ENCODE measurements at regions of chr7 and their contacts with region 1.

Region 1: DNA sequence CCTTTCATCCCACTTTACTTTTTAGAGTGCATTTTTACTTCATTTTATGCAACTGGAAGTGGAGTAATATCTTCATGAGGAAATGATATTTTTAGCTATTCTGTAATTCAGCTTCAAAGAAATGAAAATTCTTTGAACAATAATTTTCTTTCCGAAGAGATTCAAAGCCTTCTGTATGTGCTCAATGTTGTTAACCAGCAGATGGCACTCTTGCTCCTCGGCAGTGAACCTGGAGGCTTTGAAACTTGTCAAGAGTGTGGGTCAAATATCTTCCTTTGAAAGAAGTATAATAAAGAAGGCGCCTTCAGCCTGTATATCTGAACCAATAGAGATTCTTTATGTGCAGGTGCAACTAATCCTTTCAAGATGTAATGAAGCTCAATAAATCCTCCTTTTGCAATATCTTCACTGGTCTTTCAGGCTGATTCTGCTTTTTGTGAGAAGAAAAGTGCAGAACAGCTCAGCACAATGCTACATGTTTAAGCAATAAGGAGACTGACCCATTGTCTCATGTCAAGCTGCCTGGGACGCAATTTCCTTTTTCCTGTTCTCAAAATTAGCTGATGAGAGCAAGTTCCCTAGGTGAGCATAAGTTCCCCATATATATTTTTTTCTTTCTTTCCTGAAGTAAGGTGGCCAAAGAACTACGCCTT is 258.4 kb downstream of the SEMA3A start:
- DNase-seq: peak in 8 of 9 experiments; percentile 10 to 62 (median 46)
- ATAC-seq: peak; percentile 61
- H3K4me3 ChIP-seq: no peak overlapping the region
- H3K4me3 Mint-ChIP-seq: no peak overlapping the region
- H3K27ac ChIP-seq: no peak overlapping the region
- H3K27ac Mint-ChIP-seq: no peak overlapping the region
- H3K4me1 ChIP-seq: no peaks in the 10 kb centered on the region
- H3K4me1 Mint-ChIP-seq: no peaks in the 10 kb centered on the region
- H3K27me3 ChIP-seq: no peaks in the 10 kb centered on the region
- H3K27me3 Mint-ChIP-seq: no peaks in the 10 kb centered on the region
- CTCF ChIP-seq: peak; percentile 71

Region 2: GRCh38 chr7:83947260-83947659 is 11.1 kb after region 1 on chr7:
- CTCF ChIA-PET with region 1: interaction called, 17 read pairs
- POLR2A ChIA-PET with region 1: interaction called, 3 read pairs
- intact Hi-C with region 1: no loop called
- DNase-seq: peak in 1 of 9 experiments; percentile 8
- ATAC-seq: no peak
- H3K4me3 ChIP-seq: no peak overlapping the region
- H3K4me3 Mint-ChIP-seq: no peak overlapping the region
- H3K27ac ChIP-seq: no peak overlapping the region
- H3K27ac Mint-ChIP-seq: no peak overlapping the region
- H3K4me1 ChIP-seq: no peaks in the 10 kb centered on the region
- H3K4me1 Mint-ChIP-seq: no peaks in the 10 kb centered on the region
- H3K27me3 ChIP-seq: no peaks in the 10 kb centered on the region
- H3K27me3 Mint-ChIP-seq: no peaks in the 10 kb centered on the region
- CTCF ChIP-seq: no peak

Region 3: GRCh38 chr7:83976295-83976694 is 40.1 kb after region 1 on chr7:
- CTCF ChIA-PET with region 1: interaction called, 4 read pairs
- POLR2A ChIA-PET with region 1: no interaction called
- intact Hi-C with region 1: loop called in 1 of 2 experiments (anchors 1 kb)
- DNase-seq: peak in 3 of 9 experiments; percentile 7 to 49 (median 32)
- ATAC-seq: peak; percentile 70
- H3K4me3 ChIP-seq: no peak overlapping the region
- H3K4me3 Mint-ChIP-seq: no peak overlapping the region
- H3K27ac ChIP-seq: no peak overlapping the region
- H3K27ac Mint-ChIP-seq: no peak overlapping the region
- H3K4me1 ChIP-seq: no peaks in the 10 kb centered on the region
- H3K4me1 Mint-ChIP-seq: no peaks in the 10 kb centered on the region
- H3K27me3 ChIP-seq: no peaks in the 10 kb centered on the region
- H3K27me3 Mint-ChIP-seq: no peaks in the 10 kb centered on the region
- CTCF ChIP-seq: peak; percentile 73

Region 4: DNA sequence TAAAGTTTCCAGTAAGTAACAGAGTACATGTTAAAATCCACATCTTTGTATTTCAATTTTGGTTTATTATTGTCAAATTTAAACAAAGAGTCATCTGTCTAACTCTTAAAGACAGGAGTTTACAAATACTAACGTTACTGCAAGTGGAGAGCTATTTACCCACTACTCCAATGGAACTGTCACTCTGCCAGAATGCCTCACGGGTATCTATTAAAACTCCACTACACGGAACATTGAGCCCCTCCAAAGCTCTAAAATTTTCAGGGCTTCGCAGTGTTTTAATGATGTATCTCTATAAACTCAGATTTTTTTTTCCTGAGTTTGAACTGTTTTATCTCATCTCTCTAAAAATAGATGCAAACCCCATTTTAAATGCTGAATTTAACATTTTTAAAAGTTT is 647.1 kb after region 1 on chr7:
- CTCF ChIA-PET with region 1: no interaction called
- POLR2A ChIA-PET with region 1: no interaction called
- intact Hi-C with region 1: no loop called
- DNase-seq: no peak
- ATAC-seq: no peak
- H3K4me3 ChIP-seq: no peak overlapping the region
- H3K4me3 Mint-ChIP-seq: no peak overlapping the region
- H3K27ac ChIP-seq: no peak overlapping the region
- H3K27ac Mint-ChIP-seq: no peak overlapping the region
- H3K4me1 ChIP-seq: no peaks in the 10 kb centered on the region
- H3K4me1 Mint-ChIP-seq: no peaks in the 10 kb centered on the region
- H3K27me3 ChIP-seq: no peaks in the 10 kb centered on the region
- H3K27me3 Mint-ChIP-seq: no peaks in the 10 kb centered on the region
- CTCF ChIP-seq: no peak

Region 5: DNA sequence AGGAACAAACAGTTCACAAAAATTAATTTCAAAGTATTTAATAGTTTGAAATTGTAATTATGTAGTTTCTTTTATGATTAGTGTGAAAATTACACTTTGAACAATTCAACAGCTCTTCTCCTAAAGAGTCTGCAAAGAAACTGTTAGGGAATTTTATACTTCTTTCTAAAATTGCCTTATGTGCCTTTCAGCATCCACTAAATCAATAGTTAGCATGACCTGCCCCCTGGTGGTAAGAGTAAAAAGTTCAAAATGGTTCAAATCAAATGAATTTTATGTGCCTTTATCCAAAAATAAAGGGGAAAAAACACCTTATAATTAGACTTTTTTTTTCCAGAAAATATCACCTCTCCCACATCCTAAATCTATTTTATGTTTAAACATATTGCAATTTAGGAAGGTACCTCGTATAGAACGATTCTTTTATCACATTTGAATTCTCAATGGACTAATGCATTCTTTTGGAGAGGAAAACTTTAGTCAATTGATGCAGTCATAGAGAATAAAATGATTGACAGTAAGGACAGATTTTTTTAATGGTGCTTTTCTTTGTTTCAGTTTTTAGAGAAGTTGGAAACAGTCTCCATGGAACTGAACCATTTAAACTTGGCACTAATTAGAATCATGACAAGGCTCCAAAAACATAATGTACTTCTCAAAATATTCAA is 1087.0 kb after region 1 on chr7:
- CTCF ChIA-PET with region 1: interaction called, 20 read pairs
- POLR2A ChIA-PET with region 1: no interaction called
- intact Hi-C with region 1: loop called (anchors 1 kb)
- DNase-seq: peak in 3 of 9 experiments; percentile 31 to 48 (median 32)
- ATAC-seq: no peak
- H3K4me3 ChIP-seq: no peak overlapping the region
- H3K4me3 Mint-ChIP-seq: no peak overlapping the region
- H3K27ac ChIP-seq: no peak overlapping the region
- H3K27ac Mint-ChIP-seq: no peak overlapping the region
- H3K4me1 ChIP-seq: no peaks in the 10 kb centered on the region
- H3K4me1 Mint-ChIP-seq: no peaks in the 10 kb centered on the region
- H3K27me3 ChIP-seq: no peaks in the 10 kb centered on the region
- H3K27me3 Mint-ChIP-seq: peaks cover 3% of the 10 kb centered on the region
- CTCF ChIP-seq: peak; percentile 69

Region 6: DNA sequence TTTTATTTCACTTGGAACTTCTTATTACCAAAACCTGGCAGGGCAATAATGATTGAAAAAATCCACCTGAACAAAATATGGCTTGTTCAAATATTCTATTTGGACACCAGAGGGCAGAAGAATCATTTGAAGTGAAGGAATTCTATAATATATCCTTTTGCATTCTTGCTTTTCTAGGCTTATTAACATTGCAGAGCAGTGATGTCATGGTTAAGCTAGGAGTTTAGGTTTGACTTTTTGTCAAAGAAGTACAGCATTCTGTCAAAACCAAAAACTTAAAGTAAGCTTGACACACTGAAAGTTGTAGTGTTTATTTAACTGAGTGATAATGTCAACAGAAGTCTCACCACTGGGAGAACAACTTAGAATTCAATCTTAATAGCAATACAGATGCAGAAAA is 1094.7 kb after region 1 on chr7:
- CTCF ChIA-PET with region 1: interaction called, 10 read pairs
- POLR2A ChIA-PET with region 1: no interaction called
- intact Hi-C with region 1: no loop called
- DNase-seq: no peak
- ATAC-seq: no peak
- H3K4me3 ChIP-seq: no peak overlapping the region
- H3K4me3 Mint-ChIP-seq: no peak overlapping the region
- H3K27ac ChIP-seq: no peak overlapping the region
- H3K27ac Mint-ChIP-seq: no peak overlapping the region
- H3K4me1 ChIP-seq: no peaks in the 10 kb centered on the region
- H3K4me1 Mint-ChIP-seq: no peaks in the 10 kb centered on the region
- H3K27me3 ChIP-seq: no peaks in the 10 kb centered on the region
- H3K27me3 Mint-ChIP-seq: no peaks in the 10 kb centered on the region
- CTCF ChIP-seq: peak; percentile 21

Region 7: GRCh38 chr7:85554236-85555178 is 1618.3 kb after region 1 on chr7:
- CTCF ChIA-PET with region 1: interaction called, 3 read pairs
- POLR2A ChIA-PET with region 1: no interaction called
- intact Hi-C with region 1: loop called in 1 of 2 experiments (anchors 2 kb)
- DNase-seq: peak in 2 of 9 experiments; percentile 2 to 27
- ATAC-seq: no peak
- H3K4me3 ChIP-seq: no peak overlapping the region
- H3K4me3 Mint-ChIP-seq: no peak overlapping the region
- H3K27ac ChIP-seq: no peak overlapping the region
- H3K27ac Mint-ChIP-seq: no peak overlapping the region
- H3K4me1 ChIP-seq: no peaks in the 10 kb centered on the region
- H3K4me1 Mint-ChIP-seq: no peaks in the 10 kb centered on the region
- H3K27me3 ChIP-seq: no peaks in the 10 kb centered on the region
- H3K27me3 Mint-ChIP-seq: no peaks in the 10 kb centered on the region
- CTCF ChIP-seq: peak; percentile 42

Measured in CD8-positive, alpha-beta T cell (primary cell).